Body of pancreas (tissue), 4 donors: ENCODE measurements at regions of chr13 and their contacts with region 1.

Region 1: GRCh38 chr13:39612023-39612637 is 9.1 kb upstream of the LHFPL6 start:
- DNase-seq: peak; percentile 76 to 83 (median 80)
- ATAC-seq: peak; percentile 62
- H3K4me3 ChIP-seq: no peak overlapping the region
- H3K27ac ChIP-seq: no peak overlapping the region
- H3K4me1 ChIP-seq: no peaks in the 10 kb centered on the region
- H3K27me3 ChIP-seq: no peaks in the 10 kb centered on the region
- CTCF ChIP-seq: peak; percentile 76 to 82 (median 79)
- POLR2A ChIP-seq: no peak

Region 2: DNA sequence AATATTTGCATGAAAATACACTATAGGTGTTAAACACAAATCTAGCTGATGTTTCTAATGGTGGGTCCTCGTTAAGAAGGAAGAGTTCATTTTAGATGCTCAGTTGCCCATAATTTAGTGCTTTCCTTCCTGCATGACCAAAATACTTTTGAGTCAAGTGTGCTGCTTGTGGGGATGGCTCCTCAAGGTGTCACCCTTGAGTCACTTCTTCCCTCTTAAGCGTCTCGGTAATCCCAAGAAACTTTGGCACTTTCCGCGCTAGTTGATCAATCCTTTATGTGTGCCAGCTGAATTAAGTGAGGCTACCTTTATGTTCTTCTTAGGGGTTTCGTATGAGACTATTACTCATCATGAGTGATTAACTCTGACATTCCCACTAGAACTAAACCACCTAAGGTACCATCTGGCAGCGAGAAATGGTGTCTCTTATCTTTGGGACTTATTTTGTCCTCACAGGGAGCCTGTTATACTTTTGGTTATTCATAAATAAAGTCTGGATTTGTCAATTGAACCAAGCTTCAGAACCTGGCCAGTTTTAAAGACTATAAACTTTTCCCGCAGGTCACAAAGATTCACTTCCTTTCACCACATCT is 467.1 kb before region 1 on chr13:
- intact Hi-C with region 1: loop called (anchors 5 kb)
- DNase-seq: peak; percentile 55 to 69 (median 61)
- ATAC-seq: peak; percentile 70
- H3K4me3 ChIP-seq: no peak overlapping the region
- H3K27ac ChIP-seq: no peak overlapping the region
- H3K4me1 ChIP-seq: peaks cover 3% of the 10 kb centered on the region
- H3K27me3 ChIP-seq: no peaks in the 10 kb centered on the region
- CTCF ChIP-seq: peak; percentile 46 to 69 (median 67)
- POLR2A ChIP-seq: no peak